ENCODE measurements at regions of chr18 and their contacts with region 1.

Region 1: DNA sequence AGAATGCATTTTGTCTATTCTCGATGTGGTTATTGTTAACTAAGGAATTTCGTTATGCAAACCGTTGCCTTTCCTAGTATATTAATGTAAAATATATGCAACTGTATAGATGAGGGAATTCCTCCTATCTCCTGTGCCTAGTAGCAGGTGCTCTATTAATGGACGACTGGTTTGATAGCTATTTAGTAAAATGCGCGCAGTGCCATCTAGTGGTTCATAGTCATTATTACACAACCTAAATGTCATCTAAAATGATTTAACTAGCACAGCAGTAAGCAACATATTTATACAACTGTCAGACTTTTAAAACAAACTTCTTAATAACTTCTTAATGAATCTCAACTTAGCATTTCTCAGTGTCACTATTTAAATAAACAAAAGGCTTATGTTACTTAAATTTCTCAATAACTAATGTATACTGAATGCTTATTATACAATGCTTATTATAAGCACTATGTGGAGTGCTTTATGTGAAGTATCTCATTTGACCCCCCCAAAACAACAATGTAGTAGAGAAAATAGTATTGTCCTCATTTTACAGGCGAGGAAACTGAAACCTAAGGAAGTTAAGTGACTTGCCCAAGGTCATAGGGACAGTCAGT is 77.9 kb downstream of the DTNA start:
- DNase-seq: peak; percentile 20 to 32
- ATAC-seq: peak; percentile 75 to 87
- H3K4me3 ChIP-seq: no peak overlapping the region
- H3K27ac ChIP-seq: no peak overlapping the region
- H3K4me1 ChIP-seq: no peaks in the 10 kb centered on the region
- H3K27me3 ChIP-seq: no peaks in the 10 kb centered on the region
- CTCF ChIP-seq: peak; percentile 75 to 84 (median 79)
- POLR2A ChIP-seq: no peak

Region 2: DNA sequence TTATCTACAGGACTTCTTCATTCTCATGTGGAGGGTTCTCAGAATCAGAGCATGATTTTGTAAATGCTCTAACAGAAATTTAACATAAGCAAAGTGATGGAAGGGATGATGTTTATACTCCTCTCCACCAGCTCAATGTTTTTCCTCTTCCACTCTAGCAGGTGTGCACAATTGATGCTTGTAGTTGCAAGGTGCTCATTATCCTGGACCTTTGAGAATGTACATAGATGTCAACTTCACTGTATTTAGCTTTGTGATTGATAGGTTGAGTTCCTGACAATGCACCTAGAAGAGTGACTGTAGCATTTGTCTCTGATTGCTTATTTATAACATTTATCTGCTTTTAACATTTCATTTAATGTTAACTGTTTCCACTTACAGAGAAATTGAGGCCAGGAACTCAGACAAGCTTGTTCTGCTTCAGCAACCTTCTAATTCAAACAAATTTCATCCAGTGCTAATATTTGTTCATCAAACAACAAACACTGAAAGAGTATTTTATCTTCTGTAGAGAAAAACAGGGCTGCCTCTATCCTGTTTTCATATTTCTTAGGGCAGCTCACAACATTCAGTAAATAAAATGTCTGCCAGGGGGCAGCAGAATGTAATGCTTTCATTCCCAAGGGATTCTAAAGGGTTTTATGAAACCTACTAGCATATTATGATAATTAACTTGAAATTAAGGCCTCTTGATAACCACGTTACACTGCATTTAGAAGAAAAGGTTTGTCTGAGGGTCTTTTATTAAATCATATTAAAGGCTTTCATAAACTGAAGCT is 435.5 kb before region 1 on chr18:
- in situ Hi-C with region 1: loop called in 1 of 4 experiments (anchors 25 kb)
- intact Hi-C with region 1: no loop called
- DNase-seq: no peak
- ATAC-seq: no peak
- H3K4me3 ChIP-seq: no peak overlapping the region
- H3K27ac ChIP-seq: no peak overlapping the region
- H3K4me1 ChIP-seq: no peaks in the 10 kb centered on the region
- H3K27me3 ChIP-seq: no peaks in the 10 kb centered on the region
- CTCF ChIP-seq: peak in 2 of 5 experiments; percentile 16 to 46
- POLR2A ChIP-seq: no peak

Region 3: DNA sequence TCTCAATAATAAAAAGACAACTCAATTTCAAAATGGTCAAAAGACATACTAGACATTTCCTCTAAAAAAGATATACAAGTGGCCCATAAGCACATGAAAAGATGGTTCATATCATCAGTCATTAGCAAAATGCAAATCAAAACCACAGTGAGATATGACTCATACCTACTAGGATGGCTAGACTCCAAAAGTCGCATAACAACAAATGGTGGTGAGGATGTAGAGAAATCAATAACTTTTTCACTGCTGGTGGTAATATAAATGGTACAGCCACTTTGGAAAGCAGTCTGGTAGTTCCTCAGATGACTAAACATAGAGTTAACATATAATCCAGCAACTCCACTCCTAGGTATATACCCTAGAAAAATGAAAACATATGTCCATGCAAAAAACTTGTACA is 321.0 kb before region 1 on chr18:
- in situ Hi-C with region 1: no loop called
- intact Hi-C with region 1: no loop called
- DNase-seq: no peak
- ATAC-seq: no peak
- H3K4me3 ChIP-seq: no peak overlapping the region
- H3K27ac ChIP-seq: no peak overlapping the region
- H3K4me1 ChIP-seq: no peaks in the 10 kb centered on the region
- H3K27me3 ChIP-seq: no peaks in the 10 kb centered on the region
- CTCF ChIP-seq: no peak
- POLR2A ChIP-seq: no peak

Region 4: GRCh38 chr18:34522603-34523002 is 265.4 kb before region 1 on chr18:
- in situ Hi-C with region 1: loop called in 1 of 4 experiments (anchors 25 kb)
- intact Hi-C with region 1: no loop called
- DNase-seq: no peak
- ATAC-seq: no peak
- H3K4me3 ChIP-seq: no peak overlapping the region
- H3K27ac ChIP-seq: no peak overlapping the region
- H3K4me1 ChIP-seq: peaks cover 29 to 30% of the 10 kb centered on the region in 2 donors
- H3K27me3 ChIP-seq: no peaks in the 10 kb centered on the region
- CTCF ChIP-seq: no peak
- POLR2A ChIP-seq: no peak

Region 5: GRCh38 chr18:34661464-34662111 is 126.4 kb before region 1 on chr18:
- in situ Hi-C with region 1: loop called (anchors 5 to 10 kb)
- intact Hi-C with region 1: loop called (anchors 1 kb)
- DNase-seq: no peak
- ATAC-seq: peak; percentile 35 to 46
- H3K4me3 ChIP-seq: no peak overlapping the region
- H3K27ac ChIP-seq: peak overlapping the region; percentile 52 to 91 (median 86)
- H3K4me1 ChIP-seq: peaks cover 29 to 38% of the 10 kb centered on the region in 2 donors
- H3K27me3 ChIP-seq: no peaks in the 10 kb centered on the region
- CTCF ChIP-seq: peak; percentile 71 to 82 (median 77)
- POLR2A ChIP-seq: no peak

Region 6: DNA sequence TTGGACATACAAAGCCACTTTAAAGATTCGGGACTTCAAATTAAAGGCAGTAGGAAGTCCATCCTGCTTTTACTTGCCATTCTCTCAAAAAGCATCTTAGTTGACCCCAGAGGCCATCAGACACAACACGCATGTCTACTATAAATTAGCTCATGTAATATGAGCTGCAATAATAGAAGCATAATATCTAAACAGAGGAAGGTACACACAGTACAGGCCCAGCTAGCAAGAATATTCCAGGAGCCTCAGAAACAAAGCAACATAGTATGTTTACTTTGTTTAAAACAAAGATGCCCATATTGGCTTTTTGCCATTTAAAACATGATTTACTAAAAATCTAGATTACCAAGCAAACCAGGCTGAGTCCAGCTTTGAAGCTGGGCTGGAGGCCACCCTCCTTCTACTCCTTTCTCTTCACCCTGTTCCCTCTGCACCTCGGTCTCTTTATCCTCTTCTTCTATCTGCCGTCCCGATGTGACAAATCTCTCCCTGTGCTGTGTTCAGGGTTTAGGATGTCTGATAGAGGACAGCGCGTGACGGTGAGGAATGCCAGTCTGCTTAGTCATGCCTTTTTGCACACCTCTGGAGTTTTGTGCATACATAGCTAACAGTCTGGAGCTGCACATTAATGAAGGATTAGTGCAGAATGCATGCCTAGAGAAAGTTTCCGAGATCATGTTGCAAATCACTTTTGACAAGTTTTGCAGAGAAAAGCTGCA is 49.7 kb before region 1 on chr18:
- in situ Hi-C with region 1: no loop called
- intact Hi-C with region 1: loop called (anchors 5 kb)
- DNase-seq: peak; percentile 61 to 66
- ATAC-seq: peak; percentile 78 to 93
- H3K4me3 ChIP-seq: no peak overlapping the region
- H3K27ac ChIP-seq: peak overlapping the region; percentile 65 to 86 (median 74)
- H3K4me1 ChIP-seq: peaks cover 57 to 63% of the 10 kb centered on the region in 2 donors
- H3K27me3 ChIP-seq: no peaks in the 10 kb centered on the region
- CTCF ChIP-seq: no peak
- POLR2A ChIP-seq: no peak

Region 7: DNA sequence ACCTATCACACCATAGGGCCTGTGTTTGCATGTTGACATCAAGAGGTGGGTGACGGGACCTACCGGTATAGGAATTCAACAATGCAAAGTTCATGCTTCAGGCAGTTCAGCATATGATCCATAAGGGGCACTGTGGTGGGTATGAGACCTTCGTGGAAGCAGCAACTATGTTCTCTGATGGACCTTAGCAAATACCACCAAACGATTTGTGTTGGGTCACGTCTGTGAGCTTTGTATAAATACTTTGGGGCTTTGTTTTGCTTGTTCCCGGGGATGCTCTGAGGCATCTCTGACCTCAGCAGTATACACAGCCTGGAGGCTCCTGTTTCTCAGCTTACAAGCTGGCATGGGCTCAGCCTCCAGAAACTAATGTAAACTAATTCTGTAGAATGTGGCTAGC is 33.7 kb after region 1 on chr18:
- in situ Hi-C with region 1: no loop called
- intact Hi-C with region 1: no loop called
- DNase-seq: no peak
- ATAC-seq: no peak
- H3K4me3 ChIP-seq: no peak overlapping the region
- H3K27ac ChIP-seq: no peak overlapping the region
- H3K4me1 ChIP-seq: peaks cover 13% of the 10 kb centered on the region in 2 donors
- H3K27me3 ChIP-seq: no peaks in the 10 kb centered on the region
- CTCF ChIP-seq: no peak
- POLR2A ChIP-seq: no peak